ENCODE measurements at regions of chr19 and their contacts with region 1.

Region 1: DNA sequence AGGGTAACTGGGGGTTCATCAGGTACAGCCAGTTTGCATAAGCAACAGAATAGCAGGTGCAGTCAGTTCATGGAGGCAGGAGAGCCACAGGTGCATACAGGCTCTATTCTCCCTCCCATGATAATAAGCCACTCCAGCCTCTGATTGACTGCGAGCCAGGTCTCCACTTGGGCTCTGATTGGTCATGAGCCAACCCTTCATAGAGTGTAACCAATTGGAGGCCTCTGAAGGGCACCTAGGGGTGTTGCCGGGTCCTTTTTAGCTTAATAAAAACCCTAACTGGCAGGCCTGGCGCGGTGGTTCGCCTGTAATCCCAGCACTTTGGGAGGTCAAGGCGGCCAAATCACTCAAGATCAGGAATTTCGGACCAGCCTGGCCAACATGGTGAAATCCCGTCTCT is 8.7 kb upstream of the CKM start:
- DNase-seq: no peak
- ATAC-seq: no peak
- H3K4me3 ChIP-seq: no peak overlapping the region
- H3K27ac ChIP-seq: no peak overlapping the region
- H3K4me1 ChIP-seq: no peaks in the 10 kb centered on the region
- H3K27me3 ChIP-seq: no peaks in the 10 kb centered on the region
- CTCF ChIP-seq: no peak

Region 2: DNA sequence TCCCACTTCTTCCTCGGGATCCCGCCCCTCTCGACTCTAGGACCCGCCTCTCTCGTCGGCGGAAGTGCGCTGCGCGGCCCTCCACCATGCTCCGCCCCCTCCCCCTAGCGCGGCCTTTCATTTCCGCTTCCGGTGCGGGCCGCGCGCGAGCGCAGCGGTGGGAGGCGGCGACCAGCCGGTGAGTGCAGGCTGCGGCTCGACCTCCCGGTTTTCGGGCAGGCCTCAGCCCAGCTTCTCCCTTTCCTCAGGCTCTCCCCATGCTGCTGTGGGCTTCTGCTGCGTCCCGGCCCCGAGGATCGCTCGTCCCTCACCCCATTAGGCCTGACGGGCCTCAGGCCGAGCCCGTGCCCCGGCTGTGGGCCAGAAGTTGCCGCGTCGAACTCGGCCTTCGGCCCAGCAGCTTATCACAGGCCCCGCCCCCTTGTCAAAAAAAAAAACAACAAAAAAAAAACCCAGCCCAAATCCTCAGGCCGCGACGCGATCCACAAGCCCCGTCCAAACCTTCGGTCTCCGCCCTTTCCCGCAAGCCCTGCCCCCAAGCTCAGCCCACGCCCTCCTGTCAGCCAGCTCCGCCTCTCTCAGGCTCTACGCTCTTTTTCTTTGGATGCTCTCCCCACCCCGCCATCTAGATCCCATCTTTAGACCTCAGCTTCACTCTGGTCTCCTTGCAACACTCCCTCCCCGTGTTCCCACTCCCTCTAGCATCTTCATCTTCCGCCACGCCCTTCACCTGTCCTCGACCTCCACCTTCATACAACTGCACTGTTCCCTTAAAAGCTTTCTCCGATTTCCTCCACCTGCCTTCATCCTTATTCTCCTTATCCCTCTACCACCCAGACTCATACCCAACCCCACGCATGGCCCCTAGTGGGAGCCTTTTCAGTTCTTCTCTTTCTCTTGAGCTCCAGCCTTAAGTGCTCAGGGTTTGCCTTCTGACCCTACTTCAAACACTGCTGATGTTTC is 292.2 kb before region 1 on chr19 and contains the start of gene CLASRP:
- CTCF ChIA-PET with region 1: no interaction called
- POLR2A ChIA-PET with region 1: interaction called, 11 read pairs
- intact Hi-C with region 1: no loop called
- DNase-seq: peak; percentile 82
- ATAC-seq: peak; percentile 95
- H3K4me3 ChIP-seq: peak within 1 kb of the TSS; percentile 94
- H3K27ac ChIP-seq: peak within 1 kb of the TSS; percentile 78
- H3K4me1 ChIP-seq: peaks cover 9% of the 10 kb centered on the region
- H3K27me3 ChIP-seq: no peaks in the 10 kb centered on the region
- CTCF ChIP-seq: no peak
- total RNA-seq, gene CLASRP: 32.3 and 38.9 TPM in 2 replicates

Region 3: GRCh38 chr19:45306518-45307027 is 24.9 kb before region 1 on chr19:
- CTCF ChIA-PET with region 1: no interaction called
- POLR2A ChIA-PET with region 1: no interaction called
- intact Hi-C with region 1: no loop called
- DNase-seq: no peak
- ATAC-seq: no peak
- H3K4me3 ChIP-seq: no peak overlapping the region
- H3K27ac ChIP-seq: no peak overlapping the region
- H3K4me1 ChIP-seq: no peaks in the 10 kb centered on the region
- H3K27me3 ChIP-seq: no peaks in the 10 kb centered on the region
- CTCF ChIP-seq: no peak